Natural killer cell (primary cell): ENCODE measurements at regions of chr16 and their contacts with region 1.

Region 1: GRCh38 chr16:77584205-77584859 is 138.0 kb upstream of the NUDT7 start:
- DNase-seq: peak in 1 of 2 donors; percentile 69
- ATAC-seq: peak; percentile 68 to 76 (median 69)
- H3K4me3 ChIP-seq: no peak overlapping the region
- H3K4me3 Mint-ChIP-seq: no peak overlapping the region
- H3K27ac ChIP-seq: no peak overlapping the region
- H3K27ac Mint-ChIP-seq: no peak overlapping the region
- H3K4me1 ChIP-seq: peaks cover 3% of the 10 kb centered on the region
- H3K4me1 Mint-ChIP-seq: peaks cover 8% of the 10 kb centered on the region in 2 donors
- H3K27me3 ChIP-seq: peaks cover 4% of the 10 kb centered on the region
- H3K27me3 Mint-ChIP-seq: peaks cover 8 to 17% of the 10 kb centered on the region in 2 donors
- CTCF ChIP-seq: peak; percentile 84

Region 2: GRCh38 chr16:77376358-77376757 is 208.0 kb before region 1 on chr16:
- intact Hi-C with region 1: loop called (anchors 5 kb)
- DNase-seq: peak in 1 of 2 donors; percentile 30
- ATAC-seq: peak in 1 of 3 donors; percentile 50
- H3K4me3 ChIP-seq: no peak overlapping the region
- H3K4me3 Mint-ChIP-seq: no peak overlapping the region
- H3K27ac ChIP-seq: no peak overlapping the region
- H3K27ac Mint-ChIP-seq: no peak overlapping the region
- H3K4me1 ChIP-seq: no peaks in the 10 kb centered on the region
- H3K4me1 Mint-ChIP-seq: no peaks in the 10 kb centered on the region
- H3K27me3 ChIP-seq: no peaks in the 10 kb centered on the region
- H3K27me3 Mint-ChIP-seq: peaks cover 6 to 12% of the 10 kb centered on the region in 2 donors
- CTCF ChIP-seq: no peak